ENCODE measurements at regions of chr2 and their contacts with region 1.

Region 1: GRCh38 chr2:25878361-25879132 is at the start of gene ASXL2:
- DNase-seq: peak; percentile 98
- H3K4me3 Mint-ChIP-seq: peak within 1 kb of the TSS; percentile 90
- H3K27ac Mint-ChIP-seq: peak within 1 kb of the TSS; percentile 96
- H3K4me1 Mint-ChIP-seq: peaks cover 51% of the 10 kb centered on the region
- H3K27me3 Mint-ChIP-seq: peaks cover 5% of the 10 kb centered on the region
- total RNA-seq, gene ASXL2: 48.9 and 54.4 TPM in 2 replicates

Region 2: DNA sequence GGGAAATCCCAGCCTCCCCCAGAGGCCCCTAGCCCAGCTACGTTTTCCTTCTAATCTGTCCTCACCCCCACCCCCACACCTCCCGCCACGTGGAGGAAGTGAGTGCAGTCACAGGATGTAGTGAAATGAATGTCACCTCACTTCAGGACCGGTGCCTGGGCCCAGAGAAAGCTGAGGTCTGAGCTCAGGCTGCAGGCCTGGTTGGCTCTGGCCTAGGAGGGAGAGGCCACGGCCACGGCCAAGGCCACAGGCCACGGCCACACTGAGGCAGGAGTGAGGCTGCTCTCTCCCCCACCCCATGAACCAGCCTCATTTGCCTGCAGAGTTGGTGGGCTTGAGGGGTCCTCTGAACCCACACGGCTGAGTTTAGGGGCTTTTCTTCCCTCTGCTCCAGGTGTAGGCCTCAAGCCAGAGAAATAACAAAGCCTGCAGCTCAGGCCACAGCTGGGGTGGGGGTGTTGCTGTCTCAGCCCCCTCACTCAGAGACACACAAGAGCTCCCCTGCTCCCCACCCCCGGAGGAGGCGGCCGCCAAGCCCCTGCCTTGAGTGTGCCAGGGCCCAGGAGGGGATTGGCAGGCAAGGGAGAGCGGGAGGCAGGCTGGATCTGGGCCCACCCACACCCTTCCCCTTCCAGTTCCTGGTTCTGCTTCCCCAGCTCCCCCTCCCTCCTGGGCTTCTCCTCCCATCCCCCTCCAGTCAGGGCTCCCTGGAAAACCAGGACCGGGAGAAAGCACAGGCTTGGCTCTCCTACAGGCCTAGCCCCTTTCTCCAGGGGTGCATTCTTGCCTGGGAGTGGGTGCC is 563.8 kb before region 1 on chr2:
- intact Hi-C with region 1: loop called (anchors 5 kb)
- DNase-seq: peak; percentile 80
- H3K4me3 Mint-ChIP-seq: peak overlapping the region; percentile 83
- H3K27ac Mint-ChIP-seq: peak overlapping the region; percentile 97
- H3K4me1 Mint-ChIP-seq: peaks cover 56% of the 10 kb centered on the region
- H3K27me3 Mint-ChIP-seq: no peaks in the 10 kb centered on the region

Region 3: DNA sequence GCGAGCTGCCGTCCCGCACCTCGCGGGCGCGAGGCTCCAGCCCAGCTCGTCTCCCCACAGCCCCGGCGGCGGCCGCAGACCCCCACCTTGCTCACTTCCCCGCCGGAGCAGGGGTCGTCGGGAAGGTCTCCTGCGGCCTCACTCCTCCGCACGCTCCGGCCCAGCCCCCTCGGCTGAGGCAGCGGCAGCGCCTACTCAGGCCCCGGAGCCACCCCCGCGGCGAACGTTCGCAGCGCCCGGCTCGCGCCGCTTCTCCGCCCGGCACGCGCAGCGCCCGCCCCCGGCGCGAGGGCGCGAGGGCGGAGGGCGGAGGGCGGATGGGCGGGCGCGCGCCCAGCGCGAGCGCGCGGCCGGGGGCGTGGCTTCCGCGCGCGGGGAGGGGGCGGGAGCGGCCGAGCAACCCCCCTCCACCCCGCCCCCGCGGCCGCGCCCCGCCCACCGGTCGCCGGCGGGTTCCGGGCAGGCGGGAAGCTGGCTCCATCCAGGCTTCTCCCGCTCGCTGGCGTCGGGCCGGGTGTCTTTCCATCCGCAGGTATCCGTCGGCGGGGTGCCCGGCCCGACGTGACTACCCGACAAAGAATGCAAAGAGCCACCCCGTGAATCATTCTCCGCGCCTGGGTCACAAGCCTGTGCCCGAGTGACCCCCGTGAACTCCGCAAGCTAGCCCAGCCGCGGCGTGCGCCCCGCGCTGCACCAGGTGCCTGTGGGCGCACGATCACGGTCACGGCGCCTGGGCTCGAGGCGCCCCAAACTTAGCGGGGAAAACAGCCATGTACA is 205.1 kb before region 1 on chr2 and contains the start of gene DTNB:
- intact Hi-C with region 1: loop called (anchors 1 kb)
- DNase-seq: peak; percentile 75
- H3K4me3 Mint-ChIP-seq: peak within 1 kb of the TSS; percentile 83
- H3K27ac Mint-ChIP-seq: peak within 1 kb of the TSS; percentile 82
- H3K4me1 Mint-ChIP-seq: peaks cover 38% of the 10 kb centered on the region
- H3K27me3 Mint-ChIP-seq: peaks cover 26% of the 10 kb centered on the region
- total RNA-seq, gene DTNB: 28.8 and 28.9 TPM in 2 replicates

Region 4: GRCh38 chr2:25831746-25832449 is 46.6 kb before region 1 on chr2:
- intact Hi-C with region 1: loop called (anchors 1 kb)
- DNase-seq: no peak
- H3K4me3 Mint-ChIP-seq: peak overlapping the region; percentile 63
- H3K27ac Mint-ChIP-seq: peak overlapping the region; percentile 90
- H3K4me1 Mint-ChIP-seq: peaks cover 49% of the 10 kb centered on the region
- H3K27me3 Mint-ChIP-seq: no peaks in the 10 kb centered on the region

Region 5: GRCh38 chr2:25894135-25894830 is 15.7 kb after region 1 on chr2:
- intact Hi-C with region 1: no loop called
- DNase-seq: no peak
- H3K4me3 Mint-ChIP-seq: no peak overlapping the region
- H3K27ac Mint-ChIP-seq: no peak overlapping the region
- H3K4me1 Mint-ChIP-seq: no peaks in the 10 kb centered on the region
- H3K27me3 Mint-ChIP-seq: peaks cover 1% of the 10 kb centered on the region

Region 6: DNA sequence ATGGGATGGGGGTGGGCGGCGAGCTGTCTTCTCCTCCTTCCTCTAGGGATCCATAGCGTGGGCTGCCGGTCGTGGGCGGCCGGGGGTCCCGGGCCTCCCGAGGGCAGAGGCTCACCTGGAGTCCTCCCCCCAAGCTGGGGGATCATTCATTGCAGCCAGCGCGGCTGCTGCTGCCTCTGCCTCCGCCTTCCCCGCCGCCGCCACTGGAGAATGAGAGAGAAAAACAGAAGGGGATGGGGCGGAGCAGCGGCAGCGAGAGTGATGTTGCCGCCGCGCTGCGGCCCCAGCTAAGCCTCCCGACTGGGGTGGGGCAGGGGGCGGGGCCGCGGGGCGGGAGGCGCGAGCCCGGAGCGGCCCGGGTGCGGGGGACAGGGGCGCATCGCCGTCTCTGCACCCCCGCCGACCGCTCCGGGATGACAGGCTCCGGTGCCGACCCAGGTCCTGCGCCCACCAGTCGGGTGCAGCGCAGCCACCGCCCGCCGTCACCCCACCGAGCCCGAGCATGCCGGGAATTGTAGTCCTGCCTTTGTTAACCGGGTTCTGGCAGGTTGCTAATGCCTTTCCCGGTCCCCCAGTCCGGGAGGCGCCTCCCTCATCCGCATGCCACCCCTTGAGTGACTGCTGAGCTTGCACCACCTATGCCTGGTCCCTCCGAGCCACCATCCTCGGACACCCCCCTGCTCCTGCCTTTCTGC is 103.9 kb after region 1 on chr2 and contains the start of gene KIF3C:
- intact Hi-C with region 1: loop called (anchors 1 kb)
- DNase-seq: peak; percentile 73
- H3K4me3 Mint-ChIP-seq: peak within 1 kb of the TSS; percentile 89
- H3K27ac Mint-ChIP-seq: peak within 1 kb of the TSS; percentile 53
- H3K4me1 Mint-ChIP-seq: peaks cover 17% of the 10 kb centered on the region
- H3K27me3 Mint-ChIP-seq: no peaks in the 10 kb centered on the region
- total RNA-seq, gene KIF3C: 5.3 and 6.2 TPM in 2 replicates

Region 7: DNA sequence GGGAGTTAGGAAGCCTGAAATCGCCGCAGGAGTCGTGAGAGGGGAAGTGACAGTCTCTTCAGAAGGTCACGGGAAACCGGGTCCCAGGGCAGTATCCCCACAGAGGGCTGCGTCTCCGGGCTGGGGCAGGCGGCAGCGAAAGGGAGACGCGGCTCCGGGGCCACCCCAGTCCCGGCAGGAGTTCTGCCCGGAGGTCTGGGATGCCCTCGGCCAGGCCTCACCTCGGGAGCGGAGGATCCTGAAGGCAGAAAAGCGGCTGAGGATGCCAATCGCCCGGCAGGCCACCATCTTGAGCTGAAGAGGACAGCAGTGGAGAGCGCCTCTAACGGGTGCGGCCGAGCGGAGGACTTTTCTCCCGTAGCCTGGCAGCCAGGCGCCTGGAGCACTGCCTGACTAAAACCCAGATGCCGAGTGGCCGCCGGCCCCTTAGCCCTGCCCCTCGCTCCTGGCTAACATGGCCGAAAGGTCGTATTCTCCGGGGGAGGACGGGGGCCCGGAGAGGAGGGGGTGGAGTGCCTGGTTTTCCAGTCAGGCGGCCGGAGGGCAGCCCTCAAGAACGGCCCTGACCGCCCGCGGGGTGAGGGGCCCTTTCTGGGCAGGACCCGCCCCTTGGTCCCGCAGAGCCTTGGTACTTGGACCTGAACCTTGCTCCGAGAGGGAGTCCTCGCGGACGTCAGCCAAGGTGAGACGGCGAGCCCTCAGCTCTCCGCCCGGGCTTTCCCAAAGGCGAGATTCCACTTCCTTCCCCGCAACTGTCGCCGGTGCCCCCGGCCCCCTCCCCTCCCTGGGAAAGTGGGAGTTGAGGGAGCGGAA is 366.0 kb after region 1 on chr2 and contains the starts of genes HADHA and HADHB:
- intact Hi-C with region 1: loop called (anchors 1 kb)
- DNase-seq: peak; percentile 76
- H3K4me3 Mint-ChIP-seq: peak within 1 kb of the TSS; percentile 98
- H3K27ac Mint-ChIP-seq: peak within 1 kb of the TSS; percentile 96
- H3K4me1 Mint-ChIP-seq: peaks cover 44% of the 10 kb centered on the region
- H3K27me3 Mint-ChIP-seq: peaks cover 8% of the 10 kb centered on the region
- total RNA-seq, gene HADHA: 96.8 and 99.9 TPM in 2 replicates
- total RNA-seq, gene HADHB: 78.8 and 78.9 TPM in 2 replicates

Measured in activated T-helper 1 cell treated with anti-CD3 and anti-CD28 coated beads, Interleukin-12 subunit alpha, Interleukin-12 subunit beta, Interleukin-2, Interleukin-4 antibody, amounts not matched to agents 30 ng/mL and 10 ng/mL and 1 ng/mL, durations not matched to agents 14 hours and 24 hours and 36 hours (primary cell).